Sigmoid colon (tissue), 7 donors: ENCODE measurements at regions of chr2 and their contacts with region 1.

Region 1: GRCh38 chr2:178891265-178891958 is 84.2 kb upstream of the TTN start:
- DNase-seq: no peak
- H3K4me3 ChIP-seq: no peak overlapping the region
- H3K27ac ChIP-seq: no peak overlapping the region
- H3K4me1 ChIP-seq: no peaks in the 10 kb centered on the region
- H3K27me3 ChIP-seq: no peaks in the 10 kb centered on the region
- CTCF ChIP-seq: peak; percentile 30 to 97 (median 77)
- EP300 ChIP-seq: no peak
- POLR2A ChIP-seq: no peak

Region 2: GRCh38 chr2:179129574-179130238 is 238.3 kb after region 1 on chr2:
- intact Hi-C with region 1: loop called (anchors 5 kb)
- DNase-seq: no peak
- H3K4me3 ChIP-seq: no peak overlapping the region
- H3K27ac ChIP-seq: no peak overlapping the region
- H3K4me1 ChIP-seq: no peaks in the 10 kb centered on the region
- H3K27me3 ChIP-seq: no peaks in the 10 kb centered on the region
- CTCF ChIP-seq: peak in 2 of 4 experiments; percentile 34 to 36
- EP300 ChIP-seq: no peak
- POLR2A ChIP-seq: no peak

Region 3: GRCh38 chr2:179141206-179141605 is 249.8 kb after region 1 on chr2:
- intact Hi-C with region 1: no loop called
- DNase-seq: no peak
- H3K4me3 ChIP-seq: no peak overlapping the region
- H3K27ac ChIP-seq: no peak overlapping the region
- H3K4me1 ChIP-seq: peaks cover 0 to 5% (median 0%) of the 10 kb centered on the region in 4 donors
- H3K27me3 ChIP-seq: no peaks in the 10 kb centered on the region
- CTCF ChIP-seq: no peak
- EP300 ChIP-seq: no peak
- POLR2A ChIP-seq: no peak